ENCODE measurements at regions of chr15 and their contacts with region 1.

Region 1: DNA sequence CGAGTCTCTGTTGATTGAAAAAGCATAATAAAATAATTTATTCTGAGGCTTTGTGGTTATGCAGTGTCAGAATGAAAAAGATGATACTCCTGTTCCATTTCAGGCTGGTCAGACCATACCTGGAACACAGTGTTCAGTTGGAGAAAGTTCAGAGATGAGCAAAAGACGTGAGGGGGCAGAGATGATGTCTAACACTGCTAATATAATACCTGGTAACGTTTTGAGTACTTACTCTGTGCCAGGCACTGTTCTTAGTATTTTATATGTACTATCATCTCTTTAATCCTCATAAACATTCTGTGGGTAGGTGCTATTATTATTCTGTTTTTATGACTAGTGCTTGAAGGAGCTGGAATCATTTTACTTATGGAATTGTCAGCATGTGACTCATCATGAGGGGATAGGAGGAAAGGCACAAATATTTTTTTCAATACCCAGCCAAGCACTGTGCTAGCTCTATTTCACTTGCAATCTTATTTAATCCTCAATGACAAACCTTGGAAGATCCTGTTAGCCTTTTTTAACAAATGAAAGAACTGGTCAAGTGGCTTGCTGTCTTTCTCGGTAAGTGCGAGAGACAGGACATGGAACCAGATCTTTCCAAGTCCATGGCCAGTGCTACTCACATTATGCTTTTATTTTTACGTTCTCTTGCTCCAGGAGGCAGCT is 31.8 kb downstream of the IQGAP1 start:
- DNase-seq: peak; percentile 74
- H3K4me3 Mint-ChIP-seq: peak overlapping the region; percentile 62
- H3K27ac Mint-ChIP-seq: peak overlapping the region; percentile 88
- H3K4me1 Mint-ChIP-seq: peaks cover 52% of the 10 kb centered on the region
- H3K27me3 Mint-ChIP-seq: no peaks in the 10 kb centered on the region

Region 2: DNA sequence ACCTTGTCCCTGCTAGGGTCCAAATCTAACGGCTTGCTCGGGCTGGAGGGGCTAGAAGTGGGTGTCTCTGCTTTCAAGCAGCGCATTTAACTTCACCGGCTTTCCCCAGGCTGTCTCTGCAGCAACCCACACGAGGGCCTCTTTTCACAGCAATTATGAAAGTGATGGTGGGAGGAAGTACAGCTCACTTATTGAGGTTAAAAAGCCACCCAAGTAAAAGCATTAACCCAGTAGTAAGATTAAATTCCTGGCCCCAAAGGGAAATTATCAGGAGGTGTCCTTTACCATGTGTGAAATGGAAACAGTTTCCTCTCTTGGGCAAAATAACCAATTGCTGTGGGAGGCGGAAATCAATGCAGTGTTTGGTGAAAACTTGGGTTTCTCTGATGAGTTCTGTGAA is 113.3 kb before region 1 on chr15:
- intact Hi-C with region 1: loop called (anchors 1 kb)
- DNase-seq: peak; percentile 80
- H3K4me3 Mint-ChIP-seq: peak overlapping the region; percentile 66
- H3K27ac Mint-ChIP-seq: peak overlapping the region; percentile 86
- H3K4me1 Mint-ChIP-seq: peaks cover 46% of the 10 kb centered on the region
- H3K27me3 Mint-ChIP-seq: no peaks in the 10 kb centered on the region

Region 3: GRCh38 chr15:90387537-90388461 is 32.1 kb before region 1 on chr15 and contains the start of gene IQGAP1:
- intact Hi-C with region 1: loop called (anchors 2 kb)
- DNase-seq: peak; percentile 99
- H3K4me3 Mint-ChIP-seq: peak within 1 kb of the TSS; percentile 88
- H3K27ac Mint-ChIP-seq: peak within 1 kb of the TSS; percentile 99
- H3K4me1 Mint-ChIP-seq: peaks cover 42% of the 10 kb centered on the region
- H3K27me3 Mint-ChIP-seq: no peaks in the 10 kb centered on the region
- total RNA-seq, gene IQGAP1: 154 and 160 TPM in 2 replicates

Region 4: DNA sequence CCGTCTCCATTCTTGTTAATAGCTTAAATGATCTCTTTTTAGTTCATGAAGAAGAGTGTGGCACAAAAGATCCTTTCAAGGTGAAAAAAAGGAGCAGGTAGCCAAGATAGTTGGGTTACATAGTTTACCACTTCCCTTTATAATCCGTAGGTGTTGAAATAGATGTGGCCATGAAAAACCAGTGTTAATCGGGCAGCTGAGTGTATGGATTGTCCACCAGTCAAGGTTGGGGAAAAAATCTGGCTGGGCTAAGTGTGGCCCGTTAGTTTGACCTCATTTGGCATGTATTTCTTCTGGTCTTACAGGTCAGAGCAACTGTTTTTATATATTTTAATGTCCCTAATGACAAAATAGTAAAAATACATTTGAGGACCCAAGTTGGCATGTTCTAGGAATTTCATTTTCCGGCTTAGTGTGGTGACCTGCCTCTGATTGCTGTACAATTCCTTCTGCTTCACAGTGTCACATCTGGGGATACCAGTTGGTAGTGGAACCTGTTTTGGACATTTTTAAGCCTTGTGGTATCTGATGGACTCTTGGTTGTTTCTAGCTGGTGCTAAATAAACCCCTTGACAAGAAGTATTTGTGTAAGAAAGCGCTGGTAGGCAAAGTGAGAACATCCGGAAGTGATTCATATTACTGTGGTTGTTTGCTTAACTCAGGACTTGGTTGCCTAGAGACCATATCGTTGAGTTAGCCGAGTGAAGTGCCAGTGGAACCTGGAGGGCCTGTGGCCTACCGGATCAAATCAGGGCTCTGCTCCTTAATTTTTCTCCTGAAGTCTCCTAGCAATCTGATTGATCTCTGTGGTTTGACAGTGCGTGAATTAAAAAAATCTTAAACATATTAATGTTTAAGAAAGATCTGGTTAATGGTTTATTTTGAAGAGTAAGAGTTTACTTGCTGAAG is 19.2 kb before region 1 on chr15:
- intact Hi-C with region 1: loop called (anchors 1 kb)
- DNase-seq: peak; percentile 92
- H3K4me3 Mint-ChIP-seq: peak overlapping the region; percentile 79
- H3K27ac Mint-ChIP-seq: peak overlapping the region; percentile 97
- H3K4me1 Mint-ChIP-seq: peaks cover 50% of the 10 kb centered on the region
- H3K27me3 Mint-ChIP-seq: no peaks in the 10 kb centered on the region

Region 5: GRCh38 chr15:90407871-90408317 is 12.0 kb before region 1 on chr15:
- intact Hi-C with region 1: loop called (anchors 1 kb)
- DNase-seq: peak; percentile 81
- H3K4me3 Mint-ChIP-seq: peak overlapping the region; percentile 22
- H3K27ac Mint-ChIP-seq: peak overlapping the region; percentile 80
- H3K4me1 Mint-ChIP-seq: peaks cover 60% of the 10 kb centered on the region
- H3K27me3 Mint-ChIP-seq: no peaks in the 10 kb centered on the region

Measured in activated CD4-positive, alpha-beta T cell treated with anti-CD3 and anti-CD28 coated beads, Interleukin-2, amount 10 ng/mL, durations not matched to agents 24 days and 14 days (primary cell).